ENCODE measurements at regions of chr2 and their contacts with region 1.

Region 1: DNA sequence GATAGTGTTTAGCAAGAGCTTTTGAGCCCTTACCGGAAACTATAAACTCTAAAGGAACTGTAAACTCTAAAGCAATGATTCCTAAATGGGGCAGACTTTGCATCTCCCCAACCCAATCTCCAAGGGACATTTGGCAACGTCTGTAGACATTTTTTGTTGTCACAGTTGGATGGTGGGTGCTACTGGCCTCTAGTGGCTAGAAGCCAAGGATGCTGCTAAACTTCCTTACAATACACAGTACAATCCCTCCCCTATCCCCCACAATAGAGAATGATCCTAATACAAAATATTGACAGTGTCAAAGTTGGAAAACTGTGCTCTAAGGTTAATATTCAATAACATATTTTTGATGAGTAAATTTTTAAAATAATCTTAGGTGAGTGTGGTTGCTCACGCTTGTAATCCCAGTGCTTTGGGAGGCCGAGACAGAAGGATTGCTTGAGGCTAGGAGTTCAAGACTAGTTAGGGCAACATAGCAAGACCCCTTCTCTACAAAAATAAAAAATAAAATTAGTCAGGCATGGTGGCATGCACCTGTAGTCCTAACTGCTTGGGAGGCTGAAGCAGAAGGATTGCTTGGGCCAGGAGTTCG is 66.7 kb downstream of the PTPN4 start:
- DNase-seq: no peak
- ATAC-seq: peak; percentile 39

Region 2: DNA sequence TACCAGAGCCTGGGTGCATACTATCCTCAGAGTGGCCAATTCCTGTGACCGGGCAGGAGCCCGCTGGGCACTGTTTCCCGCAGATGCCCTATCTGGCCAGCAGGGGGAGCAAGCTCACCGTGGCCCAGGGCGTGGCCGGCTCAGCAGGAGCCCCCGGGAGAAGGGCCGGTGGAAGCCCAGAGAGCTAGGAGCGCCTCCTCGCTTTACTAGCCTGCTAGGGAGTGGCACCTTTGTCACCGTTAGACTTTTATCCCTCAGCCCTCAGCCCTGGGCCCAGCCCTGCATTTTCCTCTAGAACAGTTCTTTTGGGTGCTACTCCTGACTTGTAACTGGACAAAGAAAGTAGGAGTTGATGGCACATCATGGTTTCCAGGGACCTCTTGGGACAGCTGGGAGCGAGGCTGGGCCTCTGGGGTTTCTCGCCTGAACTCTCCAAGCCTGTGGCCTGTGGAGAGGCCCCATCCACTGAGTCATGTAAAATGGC is 123.5 kb before region 1 on chr2:
- intact Hi-C with region 1: loop called (anchors 2 kb)
- DNase-seq: peak; percentile 87
- ATAC-seq: peak; percentile 86

Region 3: DNA sequence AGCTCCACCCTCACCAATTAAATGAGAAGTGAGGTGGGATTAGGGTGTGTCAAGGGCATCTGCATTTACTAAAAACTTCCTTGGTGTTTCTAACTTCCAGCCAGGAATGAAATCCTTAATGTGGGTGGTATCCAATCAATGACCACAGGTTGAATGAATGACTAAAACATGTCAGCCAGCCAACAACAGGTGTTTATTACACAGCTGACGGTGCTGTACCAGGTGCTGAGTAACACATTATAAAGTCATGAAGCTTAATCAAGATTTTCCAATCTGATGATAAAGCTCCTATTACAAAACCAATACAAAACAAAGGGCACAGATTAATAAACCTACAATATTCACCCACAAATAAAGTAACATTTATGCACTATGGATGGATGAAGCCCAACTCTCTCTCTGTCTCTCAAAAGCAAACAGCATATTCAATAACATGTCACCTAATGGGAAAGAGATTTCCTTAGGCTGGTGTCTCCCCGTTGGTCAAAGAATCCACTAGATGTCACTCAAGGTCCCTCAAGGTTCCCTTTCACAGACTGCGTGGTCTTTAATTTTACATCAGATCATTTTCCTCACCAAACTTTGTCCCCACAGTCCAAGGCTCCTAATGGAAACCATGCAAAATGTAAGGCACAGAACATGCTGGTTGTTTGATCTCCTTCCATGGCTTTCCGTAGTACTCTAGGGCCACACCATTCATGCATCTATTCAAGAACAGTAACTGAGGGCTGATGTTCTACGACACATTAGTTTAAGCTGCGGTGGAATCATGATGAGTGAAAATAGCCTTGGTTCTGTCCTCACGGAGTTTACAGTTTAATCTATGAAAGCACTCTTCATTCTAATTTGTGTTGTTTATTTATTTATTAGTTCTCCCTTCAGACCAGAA is 73.2 kb before region 1 on chr2:
- intact Hi-C with region 1: loop called (anchors 2 kb)
- DNase-seq: no peak
- ATAC-seq: peak; percentile 63

Region 4: DNA sequence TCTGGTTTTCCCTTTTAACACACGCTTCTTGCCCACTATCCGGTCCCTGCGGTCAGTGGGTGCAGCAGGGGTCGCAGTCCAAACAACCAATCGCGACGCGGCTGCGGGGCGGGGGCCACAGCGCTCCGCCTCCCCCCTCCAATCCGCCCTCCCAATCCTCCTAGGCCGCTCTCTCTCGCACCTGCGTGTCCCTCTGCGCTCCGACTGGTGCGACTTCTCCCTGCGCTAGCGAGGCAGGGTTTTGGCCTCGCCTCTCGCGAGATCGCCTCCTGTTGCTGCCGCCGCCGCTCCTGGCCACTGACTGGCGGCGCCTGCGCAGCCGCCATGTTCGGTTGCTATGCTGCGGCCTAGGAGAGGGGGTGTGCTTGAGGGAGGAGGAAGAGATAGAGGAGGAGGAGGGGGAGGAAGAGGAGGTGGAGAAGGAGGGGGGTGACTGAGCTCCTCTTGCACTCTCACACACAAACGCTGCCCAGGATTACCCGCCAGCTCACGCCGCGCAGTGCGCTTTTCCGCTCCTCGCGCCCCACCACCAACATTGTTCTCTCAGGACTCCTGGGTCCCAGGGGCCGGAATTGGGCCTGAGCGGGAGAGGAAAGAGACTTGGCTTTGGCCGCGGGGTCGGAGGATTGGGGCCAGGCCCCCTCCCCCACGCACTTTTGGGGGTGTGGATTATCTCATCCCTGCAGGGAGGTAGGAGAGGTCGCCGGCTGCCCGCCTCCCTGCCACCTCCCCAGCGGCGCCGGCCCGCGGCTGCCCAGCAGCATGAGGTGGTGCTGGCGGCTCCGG is 66.8 kb before region 1 on chr2 and contains the start of gene PTPN4:
- intact Hi-C with region 1: loop called (anchors 2 kb)
- DNase-seq: peak; percentile 99
- ATAC-seq: peak; percentile 98
- total RNA-seq, gene PTPN4: 40.4 TPM

Measured in Right ventricle myocardium inferior (tissue), 1 donor.